Body of pancreas (tissue), 4 donors: ENCODE measurements at regions of chr16 and their contacts with region 1.

Region 1: GRCh38 chr16:30844671-30845449 is 49.0 kb downstream of the BCL7C start:
- DNase-seq: peak; percentile 75 to 90 (median 80)
- ATAC-seq: peak; percentile 92
- H3K4me3 ChIP-seq: no peak overlapping the region
- H3K27ac ChIP-seq: peak overlapping the region in 3 of 4 donors; percentile 26 to 58 (median 34)
- H3K4me1 ChIP-seq: peaks cover 13% of the 10 kb centered on the region
- H3K27me3 ChIP-seq: no peaks in the 10 kb centered on the region
- CTCF ChIP-seq: peak; percentile 56 to 95 (median 91)
- POLR2A ChIP-seq: no peak

Region 2: DNA sequence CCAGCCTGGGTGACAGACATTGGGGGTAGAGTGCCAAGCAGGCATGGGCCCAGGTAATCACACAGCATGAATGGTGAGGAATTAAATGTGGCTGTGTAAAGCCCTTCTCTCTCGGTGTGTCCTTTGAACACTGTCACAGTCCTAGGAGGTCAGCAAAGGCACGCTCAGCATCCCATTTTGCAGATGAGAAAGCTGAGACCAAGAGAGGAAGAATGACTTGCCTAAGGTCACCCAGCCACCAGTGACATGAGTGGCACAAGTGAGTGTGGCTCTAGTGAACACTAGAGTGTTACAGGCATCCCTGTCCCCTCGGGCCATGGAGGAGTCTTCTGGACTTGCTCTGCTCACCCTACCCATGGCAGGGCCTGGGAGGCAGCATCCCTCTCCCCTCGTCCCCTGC is 62.2 kb after region 1 on chr16:
- intact Hi-C with region 1: loop called (anchors 5 kb)
- DNase-seq: no peak
- ATAC-seq: no peak
- H3K4me3 ChIP-seq: no peak overlapping the region
- H3K27ac ChIP-seq: no peak overlapping the region
- H3K4me1 ChIP-seq: peaks cover 8% of the 10 kb centered on the region
- H3K27me3 ChIP-seq: no peaks in the 10 kb centered on the region
- CTCF ChIP-seq: no peak
- POLR2A ChIP-seq: no peak